ENCODE measurements at regions of chr3 and their contacts with region 1.

Region 1: DNA sequence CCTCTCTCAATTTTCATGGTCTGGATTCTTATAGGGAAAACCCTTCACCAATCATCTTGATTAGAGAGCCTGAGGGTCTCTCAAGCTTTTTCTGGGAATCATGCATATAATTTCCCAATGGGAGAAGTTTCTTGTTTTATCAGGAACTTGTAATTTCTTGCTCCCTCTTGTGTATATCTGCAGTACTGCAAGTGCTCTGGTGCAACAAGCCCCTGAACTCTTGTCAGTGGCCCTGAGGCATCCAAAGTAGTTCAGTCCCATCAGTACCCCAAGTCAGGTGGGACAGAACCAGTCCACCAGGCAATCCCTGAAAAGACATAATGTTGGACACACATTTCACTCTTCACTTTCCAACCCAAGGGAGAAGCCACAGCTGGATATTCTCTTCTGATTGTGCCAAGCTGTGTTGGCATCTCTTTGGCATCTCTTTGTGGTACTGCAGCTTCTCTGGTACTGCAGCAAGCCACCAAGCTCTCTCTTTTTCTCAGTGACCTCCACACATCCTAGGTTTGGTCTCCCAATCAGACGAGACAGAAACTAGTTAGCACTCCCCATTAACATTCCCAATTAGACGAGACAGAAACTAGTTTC is 214.5 kb downstream of the ZIC4 start:
- DNase-seq: peak in 1 of 2 experiments; percentile 67
- H3K4me3 ChIP-seq: no peak overlapping the region
- H3K27ac ChIP-seq: no peak overlapping the region
- H3K4me1 ChIP-seq: no peaks in the 10 kb centered on the region
- H3K27me3 ChIP-seq: no peaks in the 10 kb centered on the region
- CTCF ChIP-seq: peak; percentile 44 to 68 (median 57); a peak in 3 of 4 replicates
- EP300 ChIP-seq: no peak
- POLR2A ChIP-seq: no peak
- RAD21 ChIP-seq: peak; percentile 74 to 78

Region 2: DNA sequence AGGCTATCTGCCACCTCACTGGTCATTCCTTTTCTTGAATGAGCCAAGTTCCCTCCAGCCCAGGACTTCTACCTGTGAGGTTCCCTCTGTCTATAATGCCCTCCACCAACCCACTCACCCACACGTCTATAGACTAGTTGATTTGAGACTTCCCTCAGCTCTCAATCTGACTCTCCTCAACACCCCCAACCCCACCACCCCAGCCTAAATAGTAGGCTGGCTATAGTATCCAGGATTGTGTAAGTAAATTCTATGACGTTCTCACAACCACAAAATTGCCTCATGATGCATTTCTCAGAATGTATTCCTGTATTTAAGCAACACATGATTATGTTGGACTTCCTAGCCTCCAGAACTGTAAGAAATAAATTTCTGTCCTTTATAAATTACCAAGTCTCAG is 649.7 kb before region 1 on chr3:
- CTCF ChIA-PET with region 1: no interaction called
- POLR2A ChIA-PET with region 1: no interaction called
- DNase-seq: no peak
- H3K4me3 ChIP-seq: no peak overlapping the region
- H3K27ac ChIP-seq: no peak overlapping the region
- H3K4me1 ChIP-seq: peaks cover 0 to 5% (median 3%) of the 10 kb centered on the region in 4 experiments; a peak in 2 of 7 replicates
- H3K27me3 ChIP-seq: no peaks in the 10 kb centered on the region
- CTCF ChIP-seq: no peak
- EP300 ChIP-seq: no peak
- POLR2A ChIP-seq: no peak
- RAD21 ChIP-seq: no peak

Region 3: GRCh38 chr3:147119989-147120388 is 71.9 kb before region 1 on chr3:
- CTCF ChIA-PET with region 1: interaction called, 15 read pairs
- POLR2A ChIA-PET with region 1: no interaction called
- DNase-seq: no peak
- H3K4me3 ChIP-seq: no peak overlapping the region
- H3K27ac ChIP-seq: no peak overlapping the region
- H3K4me1 ChIP-seq: no peaks in the 10 kb centered on the region
- H3K27me3 ChIP-seq: no peaks in the 10 kb centered on the region
- CTCF ChIP-seq: peak in 1 of 3 experiments; percentile 33; a peak in 2 of 4 replicates
- EP300 ChIP-seq: no peak
- POLR2A ChIP-seq: no peak
- RAD21 ChIP-seq: peak; percentile 58 to 69

Region 4: GRCh38 chr3:147173257-147173656 is 18.6 kb before region 1 on chr3:
- CTCF ChIA-PET with region 1: interaction called, 10 read pairs
- POLR2A ChIA-PET with region 1: no interaction called
- DNase-seq: no peak
- H3K4me3 ChIP-seq: no peak overlapping the region
- H3K27ac ChIP-seq: no peak overlapping the region
- H3K4me1 ChIP-seq: no peaks in the 10 kb centered on the region
- H3K27me3 ChIP-seq: no peaks in the 10 kb centered on the region
- CTCF ChIP-seq: no peak
- EP300 ChIP-seq: no peak
- POLR2A ChIP-seq: no peak
- RAD21 ChIP-seq: no peak

Measured in H1 (cell line).